Mammary epithelial cell (primary cell): ENCODE measurements at regions of chr9 and their contacts with region 1.

Region 1: GRCh38 chr9:129250786-129251185 is 72.7 kb upstream of the IER5L start:
- DNase-seq: peak; percentile 56
- H3K4me3 ChIP-seq: no peak overlapping the region
- H3K27ac ChIP-seq: no peak overlapping the region
- H3K4me1 ChIP-seq: peaks cover 6% of the 10 kb centered on the region
- H3K27me3 ChIP-seq: no peaks in the 10 kb centered on the region
- CTCF ChIP-seq: no peak

Region 2: GRCh38 chr9:129093421-129094204 is 157.2 kb before region 1 on chr9:
- CTCF ChIA-PET with region 1: interaction called, 10 read pairs
- dilution Hi-C with region 1: no loop called
- in situ Hi-C with region 1: no loop called
- intact Hi-C with region 1: no loop called
- DNase-seq: no peak
- H3K4me3 ChIP-seq: no peak overlapping the region
- H3K27ac ChIP-seq: no peak overlapping the region
- H3K4me1 ChIP-seq: no peaks in the 10 kb centered on the region
- H3K27me3 ChIP-seq: no peaks in the 10 kb centered on the region
- CTCF ChIP-seq: no peak